PC-3 (cell line): ENCODE measurements at regions of chr5 and their contacts with region 1.

Region 1: DNA sequence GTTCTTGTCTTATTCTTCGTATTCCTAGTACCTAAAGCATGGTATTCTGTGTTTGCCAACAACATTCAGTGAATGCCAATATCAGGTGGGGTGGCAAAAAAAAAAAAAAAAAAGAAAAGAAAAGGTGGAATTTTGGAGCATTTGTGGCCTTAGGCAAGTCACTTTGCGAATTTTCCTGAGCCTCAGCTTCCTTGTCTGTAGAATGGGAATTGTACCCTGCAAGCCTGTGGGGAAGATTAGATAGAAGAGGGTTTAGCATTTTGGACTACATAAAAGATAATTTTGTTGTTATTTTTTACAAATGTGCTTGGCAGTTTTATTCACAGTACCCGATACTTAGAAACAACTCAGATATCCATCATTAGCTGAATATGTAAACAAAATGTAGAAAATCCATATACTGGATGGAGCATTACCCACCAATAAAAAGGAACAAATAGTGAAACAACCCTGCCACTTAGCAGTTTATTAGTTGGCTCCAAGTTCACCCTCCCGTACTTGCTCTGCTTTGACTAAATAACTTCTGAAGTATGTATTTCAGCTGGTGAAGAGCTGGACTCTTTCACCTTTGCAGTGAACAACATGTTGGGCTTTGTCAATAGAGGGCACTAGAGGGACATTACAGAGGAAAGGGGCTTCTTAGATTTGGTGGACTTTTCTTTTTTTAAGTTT is 13.6 kb downstream of the UBE2D2 start:
- DNase-seq: peak; percentile 60
- ATAC-seq: peak; percentile 71
- H3K4me3 ChIP-seq: no peak overlapping the region
- H3K27ac ChIP-seq: no peak overlapping the region
- H3K4me1 ChIP-seq: no peaks in the 10 kb centered on the region
- H3K27me3 ChIP-seq: no peaks in the 10 kb centered on the region
- CTCF ChIP-seq: peak; percentile 75

Region 2: GRCh38 chr5:139392678-139393496 is 181.9 kb before region 1 on chr5:
- CTCF ChIA-PET with region 1: no interaction called
- POLR2A ChIA-PET with region 1: no interaction called
- intact Hi-C with region 1: no loop called
- DNase-seq: peak; percentile 79
- ATAC-seq: peak; percentile 71
- H3K4me3 ChIP-seq: peak overlapping the region; percentile 87
- H3K27ac ChIP-seq: peak overlapping the region; percentile 98
- H3K4me1 ChIP-seq: peaks cover 20% of the 10 kb centered on the region
- H3K27me3 ChIP-seq: no peaks in the 10 kb centered on the region
- CTCF ChIP-seq: peak; percentile 66

Region 3: GRCh38 chr5:139592289-139592688 is 17.5 kb after region 1 on chr5:
- CTCF ChIA-PET with region 1: no interaction called
- POLR2A ChIA-PET with region 1: interaction called, 23 read pairs
- intact Hi-C with region 1: no loop called
- DNase-seq: no peak
- ATAC-seq: no peak
- H3K4me3 ChIP-seq: no peak overlapping the region
- H3K27ac ChIP-seq: no peak overlapping the region
- H3K4me1 ChIP-seq: peaks cover 11% of the 10 kb centered on the region
- H3K27me3 ChIP-seq: no peaks in the 10 kb centered on the region
- CTCF ChIP-seq: no peak

Region 4: DNA sequence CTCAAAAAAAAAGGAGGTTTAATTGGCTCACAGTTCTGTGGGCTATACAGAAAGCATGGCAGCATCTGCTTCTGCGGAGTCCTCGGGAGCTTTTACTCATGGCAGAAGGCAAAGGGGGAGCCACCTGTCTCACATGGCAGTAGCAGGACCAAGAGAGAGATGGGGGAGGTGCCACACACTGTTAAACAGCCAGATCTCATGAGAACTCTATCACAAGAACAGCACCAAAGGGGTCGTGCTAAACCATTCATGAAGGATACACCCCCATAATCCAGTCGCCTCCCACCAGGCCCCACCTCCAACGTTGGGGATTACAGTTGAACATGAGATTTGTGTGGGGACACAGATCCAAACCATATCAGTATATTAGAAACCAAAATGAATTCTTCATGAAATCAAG is 45.1 kb after region 1 on chr5:
- CTCF ChIA-PET with region 1: no interaction called
- POLR2A ChIA-PET with region 1: interaction called, 21 read pairs
- intact Hi-C with region 1: no loop called
- DNase-seq: no peak
- ATAC-seq: no peak
- H3K4me3 ChIP-seq: no peak overlapping the region
- H3K27ac ChIP-seq: no peak overlapping the region
- H3K4me1 ChIP-seq: no peaks in the 10 kb centered on the region
- H3K27me3 ChIP-seq: no peaks in the 10 kb centered on the region
- CTCF ChIP-seq: no peak